ENCODE measurements at regions of chr3 and their contacts with region 1.

Region 1: GRCh38 chr3:196739671-196740480 is at the start of gene PAK2:
- DNase-seq: peak; percentile 85
- H3K4me3 ChIP-seq: peak within 1 kb of the TSS; percentile 78 to 95 (median 85)
- H3K27ac ChIP-seq: peak within 1 kb of the TSS; percentile 61
- H3K4me1 ChIP-seq: peaks cover 5% of the 10 kb centered on the region
- H3K27me3 ChIP-seq: no peaks in the 10 kb centered on the region
- CTCF ChIP-seq: no peak
- POLR2A ChIP-seq: peak; percentile 78
- total RNA-seq, gene PAK2: 85.8 and 98.9 TPM in 2 replicates

Region 2: GRCh38 chr3:195442573-195443390 is 1297.1 kb before region 1 on chr3 and contains the start of gene ACAP2:
- CTCF ChIA-PET with region 1: no interaction called
- POLR2A ChIA-PET with region 1: no interaction called
- dilution Hi-C with region 1: no loop called
- intact Hi-C with region 1: loop called (anchors 5 kb)
- DNase-seq: peak; percentile 100
- H3K4me3 ChIP-seq: peak within 1 kb of the TSS; percentile 70 to 88 (median 81)
- H3K27ac ChIP-seq: peak within 1 kb of the TSS; percentile 63
- H3K4me1 ChIP-seq: peaks cover 15% of the 10 kb centered on the region
- H3K27me3 ChIP-seq: no peaks in the 10 kb centered on the region
- CTCF ChIP-seq: no peak
- POLR2A ChIP-seq: peak; percentile 93
- total RNA-seq, gene ACAP2: 34.4 and 36.9 TPM in 2 replicates

Region 3: GRCh38 chr3:196684548-196685407 is 55.1 kb before region 1 on chr3:
- CTCF ChIA-PET with region 1: no interaction called
- POLR2A ChIA-PET with region 1: no interaction called
- dilution Hi-C with region 1: no loop called
- intact Hi-C with region 1: no loop called
- DNase-seq: peak; percentile 61
- H3K4me3 ChIP-seq: no peak overlapping the region
- H3K27ac ChIP-seq: no peak overlapping the region
- H3K4me1 ChIP-seq: peaks cover 7% of the 10 kb centered on the region
- H3K27me3 ChIP-seq: peaks cover 0 to 3% of the 10 kb centered on the region in 2 experiments
- CTCF ChIP-seq: peak; percentile 73
- POLR2A ChIP-seq: no peak

Region 4: GRCh38 chr3:196711838-196712513 is 27.9 kb before region 1 on chr3 and contains the starts of genes CEP19 and PIGX:
- CTCF ChIA-PET with region 1: interaction called, 3 read pairs
- POLR2A ChIA-PET with region 1: interaction called, 5 read pairs
- dilution Hi-C with region 1: no loop called
- intact Hi-C with region 1: loop called (anchors 2 kb)
- DNase-seq: peak; percentile 84
- H3K4me3 ChIP-seq: peak within 1 kb of the TSS; percentile 40 to 72 (median 67)
- H3K27ac ChIP-seq: peak within 1 kb of the TSS; percentile 36
- H3K4me1 ChIP-seq: peaks cover 7% of the 10 kb centered on the region
- H3K27me3 ChIP-seq: no peaks in the 10 kb centered on the region
- CTCF ChIP-seq: no peak
- POLR2A ChIP-seq: peak; percentile 62
- total RNA-seq, gene CEP19: 1.2 and 1.6 TPM in 2 replicates
- total RNA-seq, gene PIGX: 12.4 and 14.0 TPM in 2 replicates

Region 5: GRCh38 chr3:196793235-196793641 is 53.4 kb after region 1 on chr3:
- CTCF ChIA-PET with region 1: interaction called, 3 read pairs
- POLR2A ChIA-PET with region 1: no interaction called
- dilution Hi-C with region 1: no loop called
- intact Hi-C with region 1: loop called (anchors 1 kb)
- DNase-seq: peak; percentile 92
- H3K4me3 ChIP-seq: peak overlapping the region in 1 of 3 experiments; percentile 4
- H3K27ac ChIP-seq: peak overlapping the region; percentile 58
- H3K4me1 ChIP-seq: peaks cover 23% of the 10 kb centered on the region
- H3K27me3 ChIP-seq: no peaks in the 10 kb centered on the region
- CTCF ChIP-seq: no peak
- POLR2A ChIP-seq: peak; percentile 24

Region 6: GRCh38 chr3:196867507-196868296 is 127.8 kb after region 1 on chr3 and contains the start of gene SENP5:
- CTCF ChIA-PET with region 1: no interaction called
- POLR2A ChIA-PET with region 1: interaction called, 10 read pairs
- dilution Hi-C with region 1: no loop called
- intact Hi-C with region 1: no loop called
- DNase-seq: peak; percentile 91
- H3K4me3 ChIP-seq: peak within 1 kb of the TSS; percentile 50 to 91 (median 73)
- H3K27ac ChIP-seq: peak within 1 kb of the TSS; percentile 73
- H3K4me1 ChIP-seq: peaks cover 10% of the 10 kb centered on the region
- H3K27me3 ChIP-seq: no peaks in the 10 kb centered on the region
- CTCF ChIP-seq: no peak
- POLR2A ChIP-seq: peak; percentile 97
- total RNA-seq, gene SENP5: 31.1 and 33.5 TPM in 2 replicates

Measured in endothelial cell of umbilical vein (primary cell).